ENCODE measurements at regions of chr1 and their contacts with region 1.

Region 1: DNA sequence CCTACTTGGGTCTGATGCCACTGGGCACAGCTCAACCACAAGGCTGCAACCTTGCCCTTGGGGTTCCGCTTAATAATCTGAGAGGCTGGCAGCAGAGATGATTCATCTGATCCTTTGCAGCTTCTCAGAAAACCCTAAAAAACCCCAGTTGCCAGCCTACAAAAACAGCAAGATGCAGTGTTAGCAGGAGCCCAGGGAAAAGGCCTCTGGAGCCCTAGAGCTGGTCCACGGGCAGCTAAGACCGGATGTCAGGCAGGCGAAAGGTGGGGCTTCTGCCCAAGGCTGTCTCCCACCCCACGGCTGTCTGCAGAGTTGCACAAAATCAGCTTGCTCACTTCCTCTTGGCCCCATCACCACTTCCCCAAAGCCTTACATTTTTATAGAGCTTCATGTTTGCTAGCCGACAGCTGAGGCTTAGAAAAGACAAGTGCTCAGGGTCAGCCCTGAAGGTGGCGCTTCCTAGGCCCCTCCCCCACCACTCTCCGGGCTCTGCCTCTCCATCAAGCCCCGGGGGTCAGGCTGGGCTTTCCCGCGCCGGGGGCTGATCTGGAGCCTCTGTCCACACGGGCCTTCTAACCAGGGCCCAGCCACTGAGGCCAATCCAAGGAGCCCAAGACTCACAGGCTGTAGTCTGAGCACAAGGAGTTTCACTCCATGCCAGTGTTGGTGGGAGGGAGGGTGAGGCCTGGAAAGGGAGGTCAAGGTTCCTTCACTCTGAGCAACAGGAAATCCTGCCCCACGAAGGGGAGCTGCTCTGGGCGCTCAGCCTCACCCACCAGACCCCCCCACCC is 4.2 kb upstream of the ADORA3 start:
- DNase-seq: peak; percentile 63 to 70
- H3K4me3 ChIP-seq: no peak overlapping the region
- H3K27ac ChIP-seq: peak overlapping the region; percentile 88 to 97 (median 95)
- H3K4me1 ChIP-seq: peaks cover 14 to 29% of the 10 kb centered on the region in 2 donors
- H3K27me3 ChIP-seq: no peaks in the 10 kb centered on the region
- CTCF ChIP-seq: no peak
- POLR2A ChIP-seq: no peak

Region 2: GRCh38 chr1:111656086-111657017 is 148.7 kb after region 1 on chr1:
- intact Hi-C with region 1: loop called (anchors 2 kb)
- DNase-seq: peak; percentile 28 to 30
- H3K4me3 ChIP-seq: no peak overlapping the region
- H3K27ac ChIP-seq: peak overlapping the region in 1 of 3 donors; percentile 1
- H3K4me1 ChIP-seq: peaks cover 21 to 24% of the 10 kb centered on the region in 2 donors
- H3K27me3 ChIP-seq: no peaks in the 10 kb centered on the region
- CTCF ChIP-seq: peak in 5 of 6 experiments; percentile 20 to 90 (median 70)
- POLR2A ChIP-seq: no peak